H1 (cell line): ENCODE measurements at regions of chr15 and their contacts with region 1.

Region 1: GRCh38 chr15:41512940-41513510 is 602 bp downstream of the LTK start:
- DNase-seq: peak in 1 of 2 experiments; percentile 77
- H3K4me3 ChIP-seq: peak overlapping the region; percentile 33 to 65 (median 58); a peak in 7 of 8 replicates
- H3K27ac ChIP-seq: no peak overlapping the region
- H3K4me1 ChIP-seq: peaks cover 0 to 26% (median 13%) of the 10 kb centered on the region in 4 experiments; a peak in 5 of 7 replicates
- H3K27me3 ChIP-seq: peaks cover 32 to 61% (median 54%) of the 10 kb centered on the region in 4 experiments
- CTCF ChIP-seq: no peak
- EP300 ChIP-seq: no peak
- POLR2A ChIP-seq: no peak
- RAD21 ChIP-seq: no peak

Region 2: GRCh38 chr15:41523097-41523496 is 10.1 kb after region 1 on chr15:
- CTCF ChIA-PET with region 1: interaction called, 5 read pairs
- POLR2A ChIA-PET with region 1: interaction called, 19 read pairs
- DNase-seq: no peak
- H3K4me3 ChIP-seq: no peak overlapping the region
- H3K27ac ChIP-seq: no peak overlapping the region
- H3K4me1 ChIP-seq: no peaks in the 10 kb centered on the region
- H3K27me3 ChIP-seq: no peaks in the 10 kb centered on the region
- CTCF ChIP-seq: no peak
- EP300 ChIP-seq: no peak
- POLR2A ChIP-seq: no peak
- RAD21 ChIP-seq: no peak

Region 3: DNA sequence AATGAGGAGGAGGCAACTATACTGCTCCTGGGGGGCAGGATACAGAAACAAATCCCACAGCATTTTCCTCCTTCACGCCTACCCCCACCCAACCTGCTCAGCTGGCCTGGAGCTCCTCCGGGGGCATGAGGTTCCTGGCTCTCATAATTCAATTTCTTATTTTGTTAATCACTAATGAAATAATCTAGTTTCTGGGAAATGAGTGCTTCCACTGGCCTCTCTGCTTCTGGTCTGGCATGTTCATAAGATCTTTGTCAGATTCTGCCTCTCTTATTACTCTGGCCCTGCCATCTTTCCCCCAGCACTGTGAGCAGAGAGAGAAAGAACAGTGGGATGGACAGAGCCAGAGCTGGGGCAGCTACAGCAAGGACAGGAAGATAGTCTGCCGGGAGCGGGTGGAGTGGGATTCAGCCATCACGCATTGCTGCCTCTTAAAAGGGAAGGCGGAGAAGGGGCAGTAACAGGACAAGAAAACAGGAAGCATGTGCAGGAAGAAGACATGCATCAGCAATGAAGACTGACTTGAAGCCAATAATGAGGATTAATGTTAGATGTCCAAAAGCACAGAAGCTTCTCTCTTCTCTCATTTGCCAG is 17.4 kb after region 1 on chr15:
- CTCF ChIA-PET with region 1: interaction called, 4 read pairs
- POLR2A ChIA-PET with region 1: interaction called, 12 read pairs
- DNase-seq: no peak
- H3K4me3 ChIP-seq: no peak overlapping the region
- H3K27ac ChIP-seq: no peak overlapping the region
- H3K4me1 ChIP-seq: no peaks in the 10 kb centered on the region
- H3K27me3 ChIP-seq: no peaks in the 10 kb centered on the region
- CTCF ChIP-seq: no peak
- EP300 ChIP-seq: no peak
- POLR2A ChIP-seq: no peak
- RAD21 ChIP-seq: no peak

Region 4: GRCh38 chr15:41695750-41696426 is 182.9 kb after region 1 on chr15:
- CTCF ChIA-PET with region 1: no interaction called
- POLR2A ChIA-PET with region 1: no interaction called
- DNase-seq: no peak
- H3K4me3 ChIP-seq: no peak overlapping the region
- H3K27ac ChIP-seq: no peak overlapping the region
- H3K4me1 ChIP-seq: no peaks in the 10 kb centered on the region
- H3K27me3 ChIP-seq: no peaks in the 10 kb centered on the region
- CTCF ChIP-seq: peak in 2 of 3 experiments; percentile 15 to 34; a peak in 1 of 4 replicates
- EP300 ChIP-seq: no peak
- POLR2A ChIP-seq: no peak
- RAD21 ChIP-seq: peak; percentile 38 to 45